A673 (cell line): ENCODE measurements at regions of chr19 and their contacts with region 1.

Region 1: DNA sequence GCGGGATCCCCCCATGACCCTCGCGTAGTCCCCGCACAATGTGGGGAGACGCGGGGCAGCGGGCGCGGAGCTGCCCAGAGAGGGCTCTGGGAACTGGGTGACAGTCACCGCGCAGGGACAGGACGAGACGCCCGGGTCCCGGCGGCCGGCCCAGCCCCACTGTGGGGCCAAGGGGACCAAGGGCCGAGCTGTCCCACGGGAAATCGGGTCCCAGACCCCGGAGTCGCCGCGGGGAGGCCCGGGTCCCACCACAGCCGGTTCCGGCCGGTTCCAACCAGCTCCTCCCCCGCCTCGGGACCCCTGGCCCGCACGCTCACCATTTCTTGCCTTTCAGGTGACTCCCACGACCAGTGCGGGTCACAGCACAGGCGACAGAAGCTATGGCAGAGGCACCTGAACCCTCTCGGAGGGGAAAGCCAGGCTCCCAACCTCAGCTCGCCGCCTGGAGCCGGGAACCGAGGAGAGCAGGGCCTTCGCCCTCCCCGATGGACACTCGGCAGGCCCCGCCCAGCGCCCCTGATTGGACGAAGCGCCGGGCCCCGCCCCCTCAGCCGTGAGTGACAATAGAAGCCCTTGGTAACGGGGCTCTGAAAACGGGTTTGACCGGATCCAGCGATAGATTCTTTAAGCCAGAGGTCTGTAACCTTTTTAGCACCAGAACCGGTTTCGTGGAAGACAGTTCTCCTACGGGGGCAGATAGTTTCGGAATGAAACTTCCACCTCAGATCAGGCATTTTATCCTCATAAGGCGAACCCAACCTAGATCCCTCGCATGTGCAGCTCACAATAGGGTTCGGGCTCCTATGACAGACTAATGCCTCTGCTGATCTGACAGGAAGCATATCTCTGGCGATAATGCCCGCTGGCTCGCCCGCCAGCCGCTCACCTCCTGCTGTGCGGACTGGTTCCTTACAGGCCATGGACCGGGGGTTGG is at the start of gene ZNF433:
- DNase-seq: peak; percentile 89
- H3K4me3 ChIP-seq: peak within 1 kb of the TSS; percentile 72
- H3K27ac ChIP-seq: peak within 1 kb of the TSS; percentile 59
- H3K4me1 ChIP-seq: no peaks in the 10 kb centered on the region
- H3K27me3 ChIP-seq: no peaks in the 10 kb centered on the region
- CTCF ChIP-seq: no peak
- total RNA-seq, gene ZNF433: 2.2 and 3.0 TPM in 2 replicates

Region 2: GRCh38 chr19:11973020-11973810 is 62.3 kb before region 1 on chr19:
- CTCF ChIA-PET with region 1: no interaction called
- POLR2A ChIA-PET with region 1: no interaction called
- intact Hi-C with region 1: no loop called
- DNase-seq: no peak
- H3K4me3 ChIP-seq: no peak overlapping the region
- H3K27ac ChIP-seq: no peak overlapping the region
- H3K4me1 ChIP-seq: no peaks in the 10 kb centered on the region
- H3K27me3 ChIP-seq: no peaks in the 10 kb centered on the region
- CTCF ChIP-seq: no peak

Region 3: GRCh38 chr19:12202250-12202649 is 166.8 kb after region 1 on chr19:
- CTCF ChIA-PET with region 1: no interaction called
- POLR2A ChIA-PET with region 1: interaction called, 11 read pairs
- intact Hi-C with region 1: no loop called
- DNase-seq: peak; percentile 15
- H3K4me3 ChIP-seq: no peak overlapping the region
- H3K27ac ChIP-seq: no peak overlapping the region
- H3K4me1 ChIP-seq: no peaks in the 10 kb centered on the region
- H3K27me3 ChIP-seq: no peaks in the 10 kb centered on the region
- CTCF ChIP-seq: peak; percentile 41; the same call in 1 of the 2 replicates